Cardiac septum (tissue), 1 donor: ENCODE measurements at regions of chr15 and their contacts with region 1.

Region 1: DNA sequence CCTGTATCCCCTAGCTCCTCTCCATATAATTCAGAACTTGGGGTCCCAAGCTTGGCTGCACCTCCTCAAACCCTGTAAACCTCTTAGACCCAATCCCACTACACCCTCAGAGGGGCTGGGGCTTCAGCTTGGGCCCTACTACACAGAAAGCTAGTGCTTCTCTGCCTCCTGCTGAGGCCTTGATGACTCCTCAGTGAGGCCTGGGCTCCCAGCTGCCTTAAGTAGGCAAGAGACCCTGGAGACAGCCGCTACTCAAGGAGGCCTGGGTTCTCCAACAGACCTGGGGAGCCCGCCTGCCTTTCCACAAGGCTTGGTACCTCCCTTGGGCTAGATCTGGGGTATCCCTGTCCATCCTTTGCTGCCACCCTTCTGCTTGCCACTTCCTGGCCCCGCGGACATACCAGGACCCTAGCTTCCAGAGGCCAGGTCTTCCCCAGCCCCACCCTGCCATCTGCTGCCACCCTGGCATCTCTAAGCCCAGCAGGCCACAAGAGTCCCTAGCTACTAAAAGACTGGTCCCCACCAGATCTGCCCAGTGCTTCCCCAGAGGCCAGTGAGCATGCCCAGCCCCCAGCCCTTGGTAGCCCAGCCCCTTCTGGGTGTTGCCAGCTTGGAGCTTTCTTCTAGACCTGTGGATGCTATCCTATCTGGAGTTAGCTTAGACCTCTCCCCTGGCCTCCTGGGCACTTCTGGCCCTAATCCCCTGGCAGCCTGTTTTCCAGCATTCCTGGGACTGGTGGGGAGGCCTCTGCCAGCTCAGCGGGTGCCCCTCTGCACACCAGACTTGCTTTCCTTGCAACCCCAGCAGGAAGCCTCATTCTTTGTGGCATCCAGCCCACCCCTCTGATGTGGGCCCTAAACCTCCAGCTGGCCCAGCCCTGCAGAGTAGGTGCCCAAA is 13.7 kb downstream of the C15orf39 start:
- DNase-seq: no peak

Region 2: GRCh38 chr15:74635228-74635627 is 580.1 kb before region 1 on chr15:
- intact Hi-C with region 1: no loop called
- DNase-seq: no peak

Region 3: DNA sequence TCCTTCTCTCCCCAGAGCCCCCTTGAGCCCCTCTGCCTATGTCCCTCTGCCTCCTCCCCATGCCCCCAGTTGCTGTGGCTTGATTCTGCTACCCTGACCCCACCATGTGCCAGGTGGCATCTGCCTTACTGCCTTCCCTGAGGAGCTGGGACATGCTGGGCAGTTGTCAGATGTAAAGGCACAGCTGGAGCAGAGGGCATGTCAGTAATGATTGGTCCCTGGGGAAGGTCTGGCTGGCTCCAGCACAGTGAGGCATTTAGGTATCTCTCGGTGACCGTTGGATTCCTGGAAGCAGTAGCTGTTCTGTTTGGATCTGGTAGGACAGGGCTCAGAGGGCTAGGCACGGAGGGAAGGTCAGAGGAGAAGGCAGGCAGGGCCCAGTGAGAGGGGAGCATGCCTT is 195.4 kb before region 1 on chr15:
- intact Hi-C with region 1: no loop called
- DNase-seq: no peak

Region 4: GRCh38 chr15:75327005-75327404 is 111.6 kb after region 1 on chr15:
- intact Hi-C with region 1: loop called (anchors 10 kb)
- DNase-seq: no peak